T-cell (primary cell): ENCODE measurements at regions of chr20 and their contacts with region 1.

Region 1: GRCh38 chr20:35849706-35850105 is 77.9 kb downstream of the PHF20 start:
- DNase-seq: no peak
- ATAC-seq: no peak
- H3K4me3 ChIP-seq: no peak overlapping the region
- H3K4me3 Mint-ChIP-seq: no peak overlapping the region
- H3K27ac ChIP-seq: no peak overlapping the region
- H3K27ac Mint-ChIP-seq: peak overlapping the region in 1 of 2 donors; percentile 17
- H3K4me1 ChIP-seq: peaks cover 0 to 4% of the 10 kb centered on the region in 2 experiments
- H3K4me1 Mint-ChIP-seq: peaks cover 20 to 36% (median 34%) of the 10 kb centered on the region in 3 donors
- H3K27me3 ChIP-seq: no peaks in the 10 kb centered on the region
- H3K27me3 Mint-ChIP-seq: no peaks in the 10 kb centered on the region

Region 2: GRCh38 chr20:35821807-35822242 is 27.9 kb before region 1 on chr20:
- CTCF ChIA-PET with region 1: no interaction called
- POLR2A ChIA-PET with region 1: interaction called in 1 of 2 experiments, 11 read pairs
- DNase-seq: no peak
- ATAC-seq: no peak
- H3K4me3 ChIP-seq: no peak overlapping the region
- H3K4me3 Mint-ChIP-seq: no peak overlapping the region
- H3K27ac ChIP-seq: no peak overlapping the region
- H3K27ac Mint-ChIP-seq: no peak overlapping the region
- H3K4me1 ChIP-seq: peaks cover 0 to 6% of the 10 kb centered on the region in 2 experiments
- H3K4me1 Mint-ChIP-seq: peaks cover 42 to 44% (median 42%) of the 10 kb centered on the region in 3 donors
- H3K27me3 ChIP-seq: no peaks in the 10 kb centered on the region
- H3K27me3 Mint-ChIP-seq: no peaks in the 10 kb centered on the region

Region 3: DNA sequence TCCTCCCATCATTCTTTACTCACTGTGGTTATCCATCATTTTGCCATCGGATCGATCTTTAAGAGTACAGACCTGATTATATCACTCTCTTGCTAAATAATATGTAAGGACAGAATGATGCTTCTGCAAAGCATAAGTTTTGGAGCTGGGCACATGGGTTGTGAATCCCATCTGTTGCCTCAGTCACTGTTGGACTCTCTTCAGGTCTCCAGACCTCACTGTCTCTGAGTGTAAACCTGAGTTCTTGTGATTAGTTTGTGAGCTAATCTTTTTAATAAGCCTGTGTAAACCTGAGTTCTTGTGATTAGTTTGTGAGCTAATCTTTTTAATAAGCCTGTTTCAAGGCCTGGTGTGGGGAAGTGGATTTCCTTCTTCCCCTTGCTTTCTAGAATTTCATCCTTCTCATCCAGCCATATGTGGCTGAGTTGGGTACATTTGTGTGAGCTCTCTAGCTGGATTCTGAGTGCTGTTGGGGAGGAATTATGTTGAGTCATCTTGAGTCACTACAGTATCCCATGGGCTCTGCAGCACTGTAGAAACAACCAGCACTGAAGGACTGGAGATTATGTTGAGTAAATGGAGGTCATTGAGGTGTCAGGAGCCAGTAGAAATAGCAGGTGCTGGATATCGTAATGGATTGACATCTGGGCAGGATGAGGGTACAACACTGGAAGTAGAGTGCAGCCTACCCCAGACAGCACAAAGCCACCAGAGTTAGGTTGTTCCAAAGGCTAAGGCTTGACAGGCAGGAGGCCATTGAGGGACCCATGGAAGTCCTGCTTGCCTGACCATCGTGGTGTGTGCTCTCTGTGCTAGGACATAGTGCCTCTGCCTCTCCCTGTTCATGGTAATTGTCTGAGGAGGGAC is 52.2 kb after region 1 on chr20:
- CTCF ChIA-PET with region 1: interaction called in 1 of 2 experiments, 14 read pairs
- POLR2A ChIA-PET with region 1: no interaction called
- DNase-seq: no peak
- ATAC-seq: no peak
- H3K4me3 ChIP-seq: no peak overlapping the region
- H3K4me3 Mint-ChIP-seq: no peak overlapping the region
- H3K27ac ChIP-seq: no peak overlapping the region
- H3K27ac Mint-ChIP-seq: no peak overlapping the region
- H3K4me1 ChIP-seq: peaks cover 0 to 2% of the 10 kb centered on the region in 2 experiments
- H3K4me1 Mint-ChIP-seq: peaks cover 14 to 28% (median 15%) of the 10 kb centered on the region in 3 donors
- H3K27me3 ChIP-seq: no peaks in the 10 kb centered on the region
- H3K27me3 Mint-ChIP-seq: no peaks in the 10 kb centered on the region